Mammary epithelial cell (primary cell): ENCODE measurements at regions of chr10 and their contacts with region 1.

Region 1: DNA sequence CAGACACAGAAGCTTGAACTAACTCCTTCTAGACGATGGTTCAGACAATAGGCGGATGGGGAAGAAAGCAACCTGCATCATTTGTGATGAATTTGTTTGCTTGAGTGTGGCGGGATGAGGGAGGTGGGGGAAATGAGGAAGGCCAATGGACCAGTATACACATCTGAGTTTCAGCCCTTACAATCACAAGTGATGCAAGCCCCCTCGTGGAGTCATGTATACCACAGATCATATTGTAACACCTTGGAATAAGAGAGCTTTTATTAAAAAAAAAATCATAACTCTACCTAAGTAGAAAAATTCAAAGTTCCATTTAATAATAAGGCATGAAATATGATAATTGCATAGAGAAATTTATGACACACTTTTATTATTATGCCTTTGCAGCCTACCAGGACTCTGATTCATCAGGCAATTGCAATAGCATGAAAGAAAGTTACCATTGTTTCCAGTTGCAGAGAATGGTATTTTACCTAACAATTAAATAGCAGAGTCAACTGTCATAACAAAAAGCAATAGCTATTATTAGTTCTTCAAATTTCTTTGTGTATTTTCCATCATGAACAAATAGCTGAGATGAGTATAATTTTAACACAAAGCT is 230.2 kb upstream of the AKR1E2 start:
- DNase-seq: peak; percentile 71
- H3K4me3 ChIP-seq: no peak overlapping the region
- H3K27ac ChIP-seq: peak overlapping the region; percentile 26
- H3K4me1 ChIP-seq: peaks cover 9% of the 10 kb centered on the region
- H3K27me3 ChIP-seq: no peaks in the 10 kb centered on the region
- CTCF ChIP-seq: no peak

Region 2: DNA sequence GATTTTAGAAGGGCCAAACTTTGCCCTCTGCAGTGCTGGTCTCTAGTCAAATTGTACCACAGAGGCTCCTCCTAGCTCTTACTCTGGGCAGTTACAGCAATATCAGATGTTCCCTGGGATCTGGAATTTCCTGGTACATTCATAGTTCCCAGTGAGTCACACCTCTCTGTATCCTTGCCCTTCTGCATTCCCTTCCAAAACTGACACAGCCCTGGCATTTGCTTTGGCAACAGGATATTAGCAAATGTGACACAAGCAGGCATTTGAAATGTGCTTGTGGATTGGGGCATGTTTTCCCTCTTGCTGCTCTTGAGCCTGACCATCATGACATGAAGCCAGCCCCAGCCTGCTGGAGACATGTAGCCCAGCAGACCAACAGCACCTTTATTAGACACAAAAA is 54.5 kb before region 1 on chr10:
- CTCF ChIA-PET with region 1: no interaction called
- dilution Hi-C with region 1: no loop called
- in situ Hi-C with region 1: no loop called
- intact Hi-C with region 1: loop called (anchors 5 kb)
- DNase-seq: peak; percentile 97
- H3K4me3 ChIP-seq: no peak overlapping the region
- H3K27ac ChIP-seq: peak overlapping the region; percentile 98
- H3K4me1 ChIP-seq: peaks cover 20% of the 10 kb centered on the region
- H3K27me3 ChIP-seq: no peaks in the 10 kb centered on the region
- CTCF ChIP-seq: peak; percentile 11 to 54